ENCODE measurements at regions of chr1 and their contacts with region 1.

Region 1: GRCh38 chr1:181166377-181167196 is 78.1 kb downstream of the IER5 start:
- DNase-seq: peak; percentile 69
- H3K4me3 Mint-ChIP-seq: no peak overlapping the region
- H3K27ac Mint-ChIP-seq: no peak overlapping the region
- H3K4me1 Mint-ChIP-seq: peaks cover 5% of the 10 kb centered on the region
- H3K27me3 Mint-ChIP-seq: peaks cover 11% of the 10 kb centered on the region

Region 2: GRCh38 chr1:180533266-180533987 is 633.2 kb before region 1 on chr1:
- intact Hi-C with region 1: loop called (anchors 5 kb)
- DNase-seq: peak; percentile 50
- H3K4me3 Mint-ChIP-seq: no peak overlapping the region
- H3K27ac Mint-ChIP-seq: no peak overlapping the region
- H3K4me1 Mint-ChIP-seq: no peaks in the 10 kb centered on the region
- H3K27me3 Mint-ChIP-seq: peaks cover 12% of the 10 kb centered on the region

Region 3: DNA sequence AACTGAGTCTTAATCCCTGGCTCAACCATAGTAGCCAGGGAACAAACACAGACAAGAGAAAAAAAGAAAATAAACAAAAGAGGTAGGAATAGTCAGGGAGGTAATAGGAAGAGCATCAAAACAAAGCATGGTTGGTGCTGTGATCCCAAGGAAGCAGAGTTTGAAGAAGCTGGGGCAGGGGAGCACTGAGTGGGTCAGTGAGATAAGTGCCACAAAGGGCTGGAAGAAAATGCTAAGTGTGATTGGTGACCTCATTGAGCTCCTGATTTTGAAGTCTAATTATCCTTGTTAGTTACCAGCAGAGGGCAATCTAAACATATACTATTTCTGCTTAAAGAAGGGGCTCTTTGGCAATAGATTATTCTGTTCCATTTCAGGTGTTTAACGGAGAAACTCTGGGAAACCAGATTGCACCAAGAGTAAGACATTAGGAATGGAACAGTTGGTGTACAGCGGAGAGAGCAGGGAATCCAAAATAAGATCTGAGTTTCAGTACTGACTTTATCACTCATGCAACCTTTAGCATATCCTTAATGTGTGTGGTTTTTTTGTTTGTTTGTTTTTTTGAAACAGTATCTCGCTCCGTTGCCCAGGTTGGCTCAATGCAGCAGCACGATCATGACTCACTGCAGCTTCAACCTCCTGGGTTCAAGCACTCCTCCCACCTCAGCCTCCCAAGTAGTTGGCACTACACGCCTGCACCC is 284.6 kb before region 1 on chr1:
- intact Hi-C with region 1: loop called (anchors 1 kb)
- DNase-seq: no peak
- H3K4me3 Mint-ChIP-seq: no peak overlapping the region
- H3K27ac Mint-ChIP-seq: no peak overlapping the region
- H3K4me1 Mint-ChIP-seq: peaks cover 4% of the 10 kb centered on the region
- H3K27me3 Mint-ChIP-seq: no peaks in the 10 kb centered on the region

Region 4: GRCh38 chr1:181033799-181034451 is 132.7 kb before region 1 on chr1 and contains the start of gene MR1:
- intact Hi-C with region 1: loop called (anchors 1 kb)
- DNase-seq: peak; percentile 42
- H3K4me3 Mint-ChIP-seq: peak within 1 kb of the TSS; percentile 93
- H3K27ac Mint-ChIP-seq: peak within 1 kb of the TSS; percentile 98
- H3K4me1 Mint-ChIP-seq: peaks cover 50% of the 10 kb centered on the region
- H3K27me3 Mint-ChIP-seq: peaks cover 2% of the 10 kb centered on the region
- total RNA-seq, gene MR1: 13.8 and 18.2 TPM in 2 replicates

Region 5: DNA sequence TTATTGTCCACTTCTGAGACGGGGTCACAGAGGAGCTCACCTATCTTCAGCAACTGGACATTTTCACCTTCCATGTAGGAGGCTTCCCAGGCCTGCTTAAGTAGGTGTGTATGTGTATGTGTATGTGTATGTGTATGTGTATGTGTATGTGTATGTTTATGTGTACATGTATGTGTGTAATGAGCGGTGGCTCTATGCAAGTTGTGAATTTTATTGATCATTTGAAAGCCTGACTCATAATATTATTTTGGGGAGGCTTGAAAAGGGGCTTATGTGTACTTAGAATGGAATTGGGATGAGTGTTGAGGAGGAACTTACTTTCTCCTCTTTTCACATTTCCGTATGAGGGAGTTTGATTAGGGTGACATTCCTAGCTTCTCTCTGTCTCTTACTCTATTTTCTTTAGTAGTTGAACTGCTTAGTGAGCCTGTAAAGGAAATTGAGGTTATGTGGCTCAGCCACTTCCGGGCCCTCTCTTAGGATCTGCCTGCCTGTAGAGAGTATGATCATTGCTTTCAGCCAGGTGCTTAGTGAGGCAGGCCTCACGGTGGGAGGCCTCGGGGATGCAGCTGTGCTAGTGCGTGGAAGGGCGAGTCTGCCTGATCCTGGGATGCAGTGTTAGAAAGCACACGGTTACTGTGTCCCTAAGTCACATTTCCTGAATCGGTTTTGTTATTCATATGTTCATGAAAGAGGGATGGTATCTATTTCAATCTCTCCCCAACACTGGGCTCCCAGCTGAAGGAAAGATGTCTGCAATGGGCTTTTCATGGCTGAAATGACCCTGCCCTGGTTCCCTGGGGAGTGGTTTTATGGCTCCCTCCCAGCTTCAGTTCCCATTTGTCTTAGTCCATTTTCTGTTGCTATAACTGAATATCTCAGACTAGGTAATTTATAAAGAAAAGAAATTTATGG is 17.0 kb before region 1 on chr1:
- intact Hi-C with region 1: loop called (anchors 2 kb)
- DNase-seq: peak; percentile 75
- H3K4me3 Mint-ChIP-seq: peak overlapping the region; percentile 54
- H3K27ac Mint-ChIP-seq: peak overlapping the region; percentile 81
- H3K4me1 Mint-ChIP-seq: peaks cover 51% of the 10 kb centered on the region
- H3K27me3 Mint-ChIP-seq: peaks cover 3% of the 10 kb centered on the region

Region 6: GRCh38 chr1:181397845-181398244 is 231.3 kb after region 1 on chr1:
- intact Hi-C with region 1: no loop called
- DNase-seq: peak; percentile 40
- H3K4me3 Mint-ChIP-seq: peak overlapping the region; percentile 55
- H3K27ac Mint-ChIP-seq: peak overlapping the region; percentile 80
- H3K4me1 Mint-ChIP-seq: peaks cover 35% of the 10 kb centered on the region
- H3K27me3 Mint-ChIP-seq: no peaks in the 10 kb centered on the region